Mucosa of descending colon (tissue), 3 donors: ENCODE measurements at regions of chr12 and their contacts with region 1.

Region 1: GRCh38 chr12:54191550-54192022 is 2.8 kb upstream of the SMUG1 start:
- DNase-seq: peak; percentile 77 to 87 (median 81)
- ATAC-seq: peak; percentile 80
- H3K4me3 ChIP-seq: no peak overlapping the region
- H3K4me1 ChIP-seq: peaks cover 14% of the 10 kb centered on the region
- CTCF ChIP-seq: peak; percentile 87

Region 2: DNA sequence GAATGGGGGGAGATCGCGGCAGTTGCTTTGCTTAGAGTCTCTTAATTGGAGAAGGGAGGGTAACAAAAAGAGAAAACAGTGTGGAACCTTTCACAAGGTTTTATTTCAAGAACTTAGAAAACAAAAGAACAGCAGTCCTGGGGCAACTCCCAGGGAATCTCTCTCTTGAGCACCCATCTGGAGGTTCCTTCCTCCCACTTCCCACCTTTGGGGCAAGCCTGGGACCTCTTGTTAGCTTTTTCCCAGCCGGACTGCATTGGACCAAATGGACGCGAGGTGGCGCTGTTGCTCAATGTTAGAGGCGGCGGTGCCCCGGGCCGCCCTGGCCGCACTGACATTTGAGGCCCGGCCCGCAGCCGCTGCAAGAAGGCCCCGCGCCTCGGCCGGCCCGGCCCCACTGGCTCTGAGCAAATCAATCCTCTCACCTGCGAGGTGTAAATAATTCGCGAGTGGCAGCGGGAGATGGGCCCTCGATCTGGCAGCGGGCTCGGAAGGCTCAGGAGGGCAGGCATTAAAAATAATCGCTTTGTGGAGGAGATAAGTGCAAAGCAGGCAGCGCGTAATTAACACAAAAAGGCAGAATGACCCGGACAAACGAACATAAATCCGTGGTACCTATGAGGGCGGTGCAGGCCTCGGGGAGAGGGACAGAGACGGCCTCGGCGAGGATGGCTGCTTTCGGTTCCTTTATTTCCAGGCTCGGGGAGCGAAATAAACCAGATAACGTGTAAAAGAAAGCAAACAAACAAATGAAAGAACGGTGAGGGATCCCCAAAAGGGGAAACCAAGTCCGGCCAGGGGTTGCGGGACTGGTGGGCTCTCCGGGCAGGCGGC is 185.5 kb before region 1 on chr12:
- intact Hi-C with region 1: loop called in 1 of 2 experiments (anchors 5 kb)
- DNase-seq: peak; percentile 82 to 91 (median 89)
- ATAC-seq: peak; percentile 93
- H3K4me3 ChIP-seq: no peak overlapping the region
- H3K4me1 ChIP-seq: peaks cover 5% of the 10 kb centered on the region
- CTCF ChIP-seq: peak; percentile 73

Region 3: GRCh38 chr12:54028314-54029201 is 163.0 kb before region 1 on chr12 and contains the start of gene HOXC6:
- intact Hi-C with region 1: loop called in 1 of 2 experiments (anchors 5 kb)
- DNase-seq: no peak
- ATAC-seq: peak; percentile 68
- H3K4me3 ChIP-seq: no peak within 1 kb of the TSS
- H3K4me1 ChIP-seq: peaks cover 11% of the 10 kb centered on the region
- CTCF ChIP-seq: no peak
- total RNA-seq, gene HOXC6: 0.22 to 0.32 TPM in 2 of 3 donors, not detected in the other

Region 4: DNA sequence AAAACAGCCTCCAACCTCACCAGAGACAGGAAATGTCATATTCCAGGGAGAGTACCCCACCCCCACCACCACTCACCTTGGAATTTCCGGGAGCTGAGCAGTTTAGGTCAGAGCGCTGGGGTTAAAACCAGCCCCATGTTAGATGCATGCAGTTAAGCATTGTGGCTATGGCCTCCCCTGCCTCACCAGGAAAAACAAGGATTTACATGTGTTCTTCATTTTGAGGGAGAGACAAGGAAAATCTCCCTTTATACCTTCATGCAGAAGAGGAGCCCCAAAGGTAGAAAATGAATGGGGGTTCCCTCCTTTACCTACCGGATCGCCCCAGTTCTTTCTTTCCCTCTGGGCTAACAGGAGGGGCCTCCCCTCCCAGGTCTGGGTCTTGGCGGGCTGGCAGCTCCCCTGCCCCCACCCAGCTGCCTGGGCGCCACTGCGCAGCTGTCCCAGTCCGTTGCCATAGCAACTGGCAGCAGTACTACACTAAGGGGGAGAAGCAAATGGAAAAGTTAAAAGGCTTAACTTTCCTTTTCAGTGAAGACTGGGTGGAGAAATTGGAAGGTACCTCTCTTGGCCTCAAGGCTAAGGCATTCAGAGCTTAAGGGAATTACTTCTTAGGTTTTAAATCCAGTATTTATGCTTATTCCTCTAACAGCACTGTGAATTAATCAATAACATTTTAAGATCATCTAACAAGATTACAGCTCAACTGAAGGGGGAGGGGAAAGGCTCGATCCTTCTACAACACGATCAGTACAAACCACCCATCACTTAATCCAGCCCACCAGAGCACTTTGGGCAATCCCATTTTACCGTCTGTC is 67.8 kb after region 1 on chr12:
- intact Hi-C with region 1: no loop called
- DNase-seq: peak; percentile 49 to 69 (median 62)
- ATAC-seq: peak; percentile 87
- H3K4me3 ChIP-seq: no peak overlapping the region
- H3K4me1 ChIP-seq: peaks cover 10% of the 10 kb centered on the region
- CTCF ChIP-seq: no peak